T-cell (primary cell): ENCODE measurements at regions of chr22 and their contacts with region 1.

Region 1: DNA sequence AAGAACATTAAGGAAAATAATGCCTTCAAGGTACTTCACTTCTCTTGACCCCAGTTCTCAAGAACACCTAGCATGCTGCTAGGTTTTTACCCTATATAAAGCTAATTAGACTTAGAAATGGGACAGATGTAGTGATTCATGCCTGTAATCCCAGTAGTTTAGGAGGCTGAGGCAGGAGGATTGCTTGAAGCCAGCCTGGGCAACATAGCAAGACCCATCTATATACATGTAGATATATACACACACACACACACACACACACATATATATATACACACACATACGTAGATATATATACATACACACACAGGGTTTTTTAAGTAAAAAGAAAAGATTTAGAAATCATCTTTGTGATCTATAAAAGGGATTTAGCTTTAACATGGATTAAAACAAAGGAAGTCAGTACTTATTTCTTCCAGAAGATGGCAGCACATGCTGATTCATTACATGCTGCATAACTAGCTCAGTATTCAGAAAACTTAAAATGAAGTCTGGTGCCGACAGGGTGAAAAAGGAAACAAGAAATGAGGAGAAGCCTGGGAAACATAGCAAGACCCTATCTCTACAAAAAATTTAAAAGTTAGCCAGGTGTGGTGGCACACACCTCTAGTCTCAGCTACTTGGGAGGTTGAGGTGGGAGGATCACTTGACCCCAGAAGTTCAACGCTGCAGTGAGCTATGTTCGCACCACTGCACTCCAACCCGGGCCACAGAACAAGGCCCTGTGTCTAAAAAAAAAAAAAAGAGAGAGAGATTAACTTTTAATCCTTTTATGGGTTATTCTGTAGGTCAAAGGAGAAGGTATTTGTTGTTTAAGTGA is 28.5 kb upstream of the RBX1 start:
- DNase-seq: peak in 11 of 35 experiments; percentile 0 to 85 (median 14)
- ATAC-seq: peak; percentile 75 to 89 (median 82)
- H3K4me3 ChIP-seq: no peak overlapping the region
- H3K4me3 Mint-ChIP-seq: peak overlapping the region in 2 of 3 donors; percentile 22 to 24
- H3K27ac ChIP-seq: no peak overlapping the region
- H3K27ac Mint-ChIP-seq: peak overlapping the region; percentile 0 to 1
- H3K4me1 ChIP-seq: peaks cover 2 to 3% of the 10 kb centered on the region in 2 experiments
- H3K4me1 Mint-ChIP-seq: peaks cover 4% of the 10 kb centered on the region in 3 donors
- H3K27me3 ChIP-seq: no peaks in the 10 kb centered on the region
- H3K27me3 Mint-ChIP-seq: no peaks in the 10 kb centered on the region

Region 2: DNA sequence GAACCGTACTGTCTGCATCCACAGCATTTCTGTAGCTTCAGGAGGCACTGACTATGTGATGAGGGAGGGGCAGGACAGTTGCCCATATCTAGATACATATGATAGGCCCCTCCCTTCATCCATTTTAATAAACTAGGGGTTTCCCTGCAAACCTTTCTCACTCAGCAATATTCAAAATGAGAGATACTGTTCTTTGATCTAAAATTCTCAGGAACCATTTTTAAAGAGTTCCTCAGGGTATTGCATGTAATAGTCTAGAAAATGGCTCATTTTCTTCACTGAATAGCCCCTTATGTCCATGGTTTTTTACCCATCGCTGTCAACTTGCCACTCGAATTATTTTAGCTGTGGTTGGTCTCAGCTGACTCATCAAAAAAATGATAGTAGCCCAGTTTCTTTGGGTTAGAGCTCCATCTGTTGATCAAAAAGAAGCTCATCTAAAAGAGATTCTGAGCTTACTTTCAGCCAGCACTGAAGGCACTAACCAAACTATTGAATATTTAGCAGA is 23.8 kb before region 1 on chr22:
- CTCF ChIA-PET with region 1: interaction called, 3 to 10 read pairs
- POLR2A ChIA-PET with region 1: no interaction called
- DNase-seq: peak in 1 of 35 experiments; percentile 68
- ATAC-seq: peak; percentile 52 to 65 (median 58)
- H3K4me3 ChIP-seq: no peak overlapping the region
- H3K4me3 Mint-ChIP-seq: no peak overlapping the region
- H3K27ac ChIP-seq: no peak overlapping the region
- H3K27ac Mint-ChIP-seq: no peak overlapping the region
- H3K4me1 ChIP-seq: no peaks in the 10 kb centered on the region
- H3K4me1 Mint-ChIP-seq: peaks cover 5 to 9% (median 5%) of the 10 kb centered on the region in 3 donors
- H3K27me3 ChIP-seq: no peaks in the 10 kb centered on the region
- H3K27me3 Mint-ChIP-seq: no peaks in the 10 kb centered on the region

Region 3: DNA sequence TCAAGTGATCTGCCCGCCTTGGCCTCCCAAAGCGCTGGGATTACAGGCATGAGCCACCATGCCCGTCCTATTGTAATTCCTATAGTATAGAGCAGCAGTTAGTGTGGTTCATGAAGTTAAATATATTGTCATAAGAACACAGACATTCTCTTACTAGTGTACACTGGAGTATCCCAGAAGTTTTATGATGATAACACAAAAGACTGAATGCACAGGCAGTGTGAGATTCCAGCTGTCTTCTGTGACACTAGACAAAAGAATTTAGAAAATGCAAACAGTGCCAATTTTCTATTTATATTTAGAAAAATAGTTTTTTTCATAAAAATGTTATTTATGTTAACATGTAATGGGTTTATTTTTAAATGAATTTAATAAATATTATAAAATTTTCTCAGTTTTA is 10.9 kb before region 1 on chr22:
- CTCF ChIA-PET with region 1: interaction called in 1 of 2 experiments, 13 read pairs
- POLR2A ChIA-PET with region 1: no interaction called
- DNase-seq: no peak
- ATAC-seq: no peak
- H3K4me3 ChIP-seq: no peak overlapping the region
- H3K4me3 Mint-ChIP-seq: no peak overlapping the region
- H3K27ac ChIP-seq: no peak overlapping the region
- H3K27ac Mint-ChIP-seq: no peak overlapping the region
- H3K4me1 ChIP-seq: no peaks in the 10 kb centered on the region
- H3K4me1 Mint-ChIP-seq: no peaks in the 10 kb centered on the region
- H3K27me3 ChIP-seq: no peaks in the 10 kb centered on the region
- H3K27me3 Mint-ChIP-seq: no peaks in the 10 kb centered on the region

Region 4: DNA sequence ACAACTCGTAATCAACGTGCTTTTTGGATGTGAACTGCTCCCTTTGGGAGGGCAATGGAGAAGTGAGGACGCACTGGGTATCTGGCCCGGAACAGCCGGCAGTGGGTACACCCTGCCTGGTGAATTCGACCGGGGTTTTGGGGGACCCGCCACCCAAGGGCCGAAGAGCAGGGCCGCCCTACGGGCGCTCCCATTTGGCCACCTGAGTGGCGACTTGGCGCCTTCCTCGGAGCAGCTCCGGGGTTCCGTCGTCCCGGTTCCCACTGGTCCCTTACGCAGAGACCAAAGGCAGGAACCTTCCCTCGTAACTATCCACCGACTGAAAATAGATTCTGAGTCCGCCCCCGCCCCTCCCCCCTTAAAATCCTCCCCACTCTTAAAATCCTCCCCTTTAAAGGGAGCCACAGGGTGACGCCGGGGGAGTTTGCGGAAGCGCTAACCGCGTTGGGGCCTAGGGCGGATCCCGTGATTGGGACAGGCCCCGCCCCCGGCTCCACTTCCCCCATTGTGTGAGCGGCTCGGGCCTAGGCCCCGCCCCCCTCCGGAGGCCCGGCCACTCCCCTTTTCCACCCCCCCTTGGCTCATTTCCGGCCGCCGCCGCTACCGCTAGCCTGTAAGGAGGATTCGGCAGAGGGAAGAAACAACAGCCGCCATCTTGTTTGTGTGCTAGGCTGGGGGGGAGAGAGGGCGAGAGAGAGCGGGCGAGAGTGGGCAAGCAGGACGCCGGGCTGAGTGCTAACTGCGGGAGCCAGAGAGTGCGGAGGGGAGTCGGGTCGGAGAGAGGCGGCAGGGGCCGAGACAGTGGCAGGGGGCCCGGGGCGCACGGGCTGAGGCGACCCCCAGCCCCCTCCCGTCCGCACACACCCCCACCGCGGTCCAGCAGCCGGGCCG is 168.7 kb after region 1 on chr22:
- CTCF ChIA-PET with region 1: interaction called in 1 of 2 experiments, 24 read pairs
- POLR2A ChIA-PET with region 1: interaction called in 1 of 2 experiments, 6 read pairs
- DNase-seq: peak; percentile 98 to 100 (median 99)
- ATAC-seq: peak; percentile 84 to 90 (median 87)
- H3K4me3 ChIP-seq: peak overlapping the region; percentile 63 to 96
- H3K4me3 Mint-ChIP-seq: peak overlapping the region; percentile 98 to 99 (median 99)
- H3K27ac ChIP-seq: peak overlapping the region; percentile 96
- H3K27ac Mint-ChIP-seq: peak overlapping the region; percentile 99 to 100
- H3K4me1 ChIP-seq: peaks cover 17% of the 10 kb centered on the region in 2 experiments
- H3K4me1 Mint-ChIP-seq: peaks cover 31 to 36% (median 31%) of the 10 kb centered on the region in 3 donors
- H3K27me3 ChIP-seq: no peaks in the 10 kb centered on the region
- H3K27me3 Mint-ChIP-seq: no peaks in the 10 kb centered on the region

Region 5: GRCh38 chr22:41237707-41238569 is 315.2 kb after region 1 on chr22:
- CTCF ChIA-PET with region 1: interaction called, 11 to 93 read pairs
- POLR2A ChIA-PET with region 1: interaction called in 1 of 2 experiments, 12 read pairs
- DNase-seq: peak; percentile 68 to 90 (median 80)
- ATAC-seq: peak; percentile 93 to 97 (median 95)
- H3K4me3 ChIP-seq: peak overlapping the region; percentile 40 to 62
- H3K4me3 Mint-ChIP-seq: peak overlapping the region in 2 of 3 donors; percentile 73 to 77
- H3K27ac ChIP-seq: no peak overlapping the region
- H3K27ac Mint-ChIP-seq: no peak overlapping the region
- H3K4me1 ChIP-seq: peaks cover 0 to 12% of the 10 kb centered on the region in 2 experiments
- H3K4me1 Mint-ChIP-seq: peaks cover 6 to 13% (median 10%) of the 10 kb centered on the region in 3 donors
- H3K27me3 ChIP-seq: no peaks in the 10 kb centered on the region
- H3K27me3 Mint-ChIP-seq: no peaks in the 10 kb centered on the region

Region 6: GRCh38 chr22:41848468-41848867 is 925.8 kb after region 1 on chr22:
- CTCF ChIA-PET with region 1: no interaction called
- POLR2A ChIA-PET with region 1: no interaction called
- DNase-seq: peak in 2 of 35 experiments; percentile 28 to 33
- ATAC-seq: peak in 1 of 4 experiments; percentile 38
- H3K4me3 ChIP-seq: no peak overlapping the region
- H3K4me3 Mint-ChIP-seq: no peak overlapping the region
- H3K27ac ChIP-seq: no peak overlapping the region
- H3K27ac Mint-ChIP-seq: no peak overlapping the region
- H3K4me1 ChIP-seq: peaks cover 0 to 15% of the 10 kb centered on the region in 2 experiments
- H3K4me1 Mint-ChIP-seq: peaks cover 33 to 58% (median 53%) of the 10 kb centered on the region in 3 donors
- H3K27me3 ChIP-seq: no peaks in the 10 kb centered on the region
- H3K27me3 Mint-ChIP-seq: no peaks in the 10 kb centered on the region